ENCODE measurements at regions of chr17 and their contacts with region 1.

Region 1: DNA sequence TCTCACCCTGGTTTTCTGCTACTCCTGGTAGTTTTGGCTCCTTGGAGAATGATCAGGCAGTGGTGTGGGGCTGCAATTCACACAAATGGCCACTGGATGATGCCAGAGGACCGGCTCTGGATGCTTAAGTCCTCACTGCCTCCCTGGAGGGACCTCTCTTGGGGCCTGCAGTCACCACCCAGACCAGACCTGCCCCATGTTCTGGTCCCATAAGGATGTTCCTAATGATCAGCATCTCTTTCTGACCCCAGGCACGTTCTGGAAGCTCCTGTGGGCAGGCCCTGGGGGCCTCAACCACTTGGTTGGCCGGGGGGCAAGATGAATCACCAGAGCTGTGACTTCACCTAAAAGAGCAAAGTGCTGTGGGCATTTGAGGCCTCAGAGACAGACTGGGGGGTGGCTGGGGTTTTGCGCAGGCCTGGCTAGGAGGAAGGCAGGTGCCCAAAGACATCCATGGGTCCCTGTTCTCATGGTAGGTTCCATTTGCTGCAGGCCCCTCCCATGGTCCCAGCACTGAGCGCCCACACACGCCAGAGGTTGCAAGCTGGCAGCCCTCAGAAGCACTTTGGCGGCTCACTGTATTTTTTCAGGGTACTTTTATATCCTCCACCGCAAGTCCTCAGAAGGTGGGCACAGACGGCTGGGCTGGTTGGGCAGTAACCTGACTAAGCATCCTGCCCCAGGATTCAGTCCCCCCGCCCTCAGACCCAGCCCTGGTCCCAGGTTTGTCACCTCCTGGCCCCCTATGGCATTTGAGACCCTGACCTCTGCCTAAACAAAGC is 53.2 kb downstream of the NT5M start:
- DNase-seq: peak; percentile 38 to 76 (median 59)
- H3K4me3 ChIP-seq: no peak overlapping the region
- H3K4me3 Mint-ChIP-seq: no peak overlapping the region
- H3K27ac ChIP-seq: no peak overlapping the region
- H3K27ac Mint-ChIP-seq: peak overlapping the region in 1 of 8 donors; percentile 12
- H3K4me1 ChIP-seq: no peaks in the 10 kb centered on the region
- H3K4me1 Mint-ChIP-seq: peaks cover 5 to 6% (median 5%) of the 10 kb centered on the region in 3 donors
- H3K27me3 ChIP-seq: no peaks in the 10 kb centered on the region
- H3K27me3 Mint-ChIP-seq: peaks cover 0 to 5% of the 10 kb centered on the region in 2 donors

Region 2: GRCh38 chr17:17366941-17367875 is 10.9 kb after region 1 on chr17:
- CTCF ChIA-PET with region 1: interaction called, 13 read pairs
- POLR2A ChIA-PET with region 1: no interaction called
- DNase-seq: no peak
- H3K4me3 ChIP-seq: no peak overlapping the region
- H3K4me3 Mint-ChIP-seq: no peak overlapping the region
- H3K27ac ChIP-seq: no peak overlapping the region
- H3K27ac Mint-ChIP-seq: peak overlapping the region in 1 of 8 donors; percentile 72
- H3K4me1 ChIP-seq: peaks cover 15% of the 10 kb centered on the region
- H3K4me1 Mint-ChIP-seq: peaks cover 11% of the 10 kb centered on the region in 3 donors
- H3K27me3 ChIP-seq: peaks cover 3% of the 10 kb centered on the region
- H3K27me3 Mint-ChIP-seq: peaks cover 4 to 10% of the 10 kb centered on the region in 2 donors

Region 3: DNA sequence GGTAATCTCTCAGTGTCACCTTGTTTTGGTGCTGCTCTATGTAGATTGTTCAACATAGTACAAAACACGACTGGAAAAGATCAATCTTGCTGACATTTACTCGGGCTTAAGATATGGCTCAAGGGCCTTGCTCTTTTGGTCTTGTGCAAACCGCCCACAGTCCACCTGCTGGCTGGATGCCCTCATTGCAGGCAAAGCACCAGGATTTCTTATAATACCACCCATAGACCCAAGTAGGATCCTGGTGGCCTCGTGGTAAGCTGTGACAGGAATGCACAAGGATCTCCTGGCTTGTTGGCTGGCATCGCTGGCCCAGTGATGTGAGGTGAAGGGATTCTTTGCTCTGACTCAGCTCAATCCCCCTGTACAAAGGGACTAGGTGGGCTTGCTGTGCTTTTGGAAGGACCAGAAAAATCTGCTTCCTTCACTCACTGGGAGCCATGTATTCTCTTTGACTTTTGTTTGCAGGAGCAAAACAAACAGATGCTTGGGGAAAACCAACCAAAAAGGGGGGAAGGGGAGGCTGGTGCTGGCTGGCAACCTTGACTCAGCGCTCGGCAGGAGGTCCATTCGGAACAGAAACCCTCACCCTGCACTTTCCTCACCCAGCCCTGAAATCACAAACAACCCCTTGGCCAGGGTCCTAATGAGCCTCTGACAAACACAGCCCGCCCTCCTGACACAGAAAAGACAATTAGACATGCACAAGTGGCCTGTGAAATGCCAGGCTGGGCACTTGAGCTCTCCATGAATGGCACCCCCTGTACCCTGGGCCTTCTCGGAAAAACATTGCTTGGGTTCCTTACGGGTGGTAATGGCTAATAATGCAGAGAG is 83.9 kb after region 1 on chr17:
- CTCF ChIA-PET with region 1: interaction called, 12 read pairs
- POLR2A ChIA-PET with region 1: no interaction called
- DNase-seq: peak; percentile 60 to 83 (median 65)
- H3K4me3 ChIP-seq: no peak overlapping the region
- H3K4me3 Mint-ChIP-seq: no peak overlapping the region
- H3K27ac ChIP-seq: no peak overlapping the region
- H3K27ac Mint-ChIP-seq: peak overlapping the region in 3 of 8 donors; percentile 3 to 70 (median 31)
- H3K4me1 ChIP-seq: no peaks in the 10 kb centered on the region
- H3K4me1 Mint-ChIP-seq: peaks cover 4 to 10% (median 10%) of the 10 kb centered on the region in 3 donors
- H3K27me3 ChIP-seq: no peaks in the 10 kb centered on the region
- H3K27me3 Mint-ChIP-seq: peaks cover 0 to 3% of the 10 kb centered on the region in 2 donors

Region 4: DNA sequence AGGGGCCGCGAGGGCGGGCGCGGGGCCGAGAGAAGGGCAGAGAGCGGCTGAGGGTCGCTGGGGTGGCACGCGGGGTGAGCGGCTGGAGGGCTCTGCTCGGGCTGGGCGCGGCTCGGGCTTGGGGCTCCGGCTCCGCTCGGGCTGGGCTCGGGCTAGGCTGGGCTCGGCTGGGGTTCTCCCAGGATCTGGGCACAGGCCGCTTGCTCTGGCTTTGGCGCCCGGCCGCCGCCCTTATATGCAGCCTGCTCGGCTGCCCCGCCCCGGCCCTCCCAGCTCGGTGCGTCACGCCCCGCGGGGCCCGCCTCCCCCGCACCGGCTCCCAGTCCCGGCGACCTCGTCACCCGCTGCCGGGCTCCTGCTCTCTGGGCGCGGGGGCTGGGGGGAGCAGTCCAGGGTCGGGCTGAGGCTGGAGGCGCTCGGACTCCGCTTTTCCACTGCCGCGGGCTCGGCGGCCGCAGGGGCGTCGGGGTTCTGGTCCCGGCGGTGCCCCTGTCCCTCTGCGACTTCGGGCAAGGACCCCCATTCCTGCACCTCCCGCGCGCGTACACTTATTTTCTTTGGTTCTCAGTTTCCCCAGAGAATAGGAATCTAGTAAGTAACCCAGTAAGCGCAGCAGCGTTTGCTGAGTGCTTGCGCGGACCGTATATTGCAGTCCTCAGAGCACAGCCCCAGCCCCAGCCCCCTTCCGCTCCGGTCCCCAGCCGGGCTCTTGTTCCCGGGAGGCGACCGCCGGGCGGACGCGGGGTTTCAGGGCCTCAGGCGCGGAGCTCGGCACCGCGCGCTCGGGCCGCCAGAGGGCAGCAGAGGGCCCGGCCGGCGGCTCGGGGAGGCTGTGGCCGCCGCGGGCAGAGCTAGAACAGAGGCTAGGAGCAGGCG is 140.1 kb after region 1 on chr17 and contains the start of gene RASD1:
- CTCF ChIA-PET with region 1: interaction called, 25 read pairs
- POLR2A ChIA-PET with region 1: no interaction called
- DNase-seq: peak; percentile 70 to 82 (median 77)
- H3K4me3 ChIP-seq: peak within 1 kb of the TSS; percentile 63
- H3K4me3 Mint-ChIP-seq: peak within 1 kb of the TSS; percentile 76 to 92 (median 85)
- H3K27ac ChIP-seq: no peak within 1 kb of the TSS
- H3K27ac Mint-ChIP-seq: peak within 1 kb of the TSS in 4 of 8 donors; percentile 16 to 84 (median 76)
- H3K4me1 ChIP-seq: peaks cover 10% of the 10 kb centered on the region
- H3K4me1 Mint-ChIP-seq: peaks cover 11 to 25% (median 11%) of the 10 kb centered on the region in 3 donors
- H3K27me3 ChIP-seq: no peaks in the 10 kb centered on the region
- H3K27me3 Mint-ChIP-seq: peaks cover 5 to 7% of the 10 kb centered on the region in 2 donors
- total RNA-seq, gene RASD1: 1.0 to 1.1 TPM

Region 5: DNA sequence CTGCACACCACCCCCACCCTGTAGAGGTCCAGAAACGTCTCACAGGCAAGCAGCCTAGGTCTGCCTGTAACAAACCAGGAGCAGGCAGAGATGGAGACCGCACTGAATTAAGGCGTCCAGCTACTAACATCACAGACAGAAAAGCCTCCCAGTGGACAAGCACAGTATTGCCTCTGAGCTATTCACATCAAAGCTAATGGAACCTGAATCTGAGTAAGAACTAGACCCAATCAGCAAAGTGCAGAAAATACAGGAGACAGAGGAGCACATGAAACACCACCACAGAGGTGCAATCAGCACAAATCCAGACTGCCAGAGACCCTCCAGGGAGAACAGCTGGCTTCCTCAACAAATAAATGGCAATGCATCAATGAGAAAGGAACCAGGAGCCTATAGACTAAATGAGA is 257.4 kb after region 1 on chr17:
- CTCF ChIA-PET with region 1: interaction called, 13 read pairs
- POLR2A ChIA-PET with region 1: no interaction called
- DNase-seq: peak in 3 of 5 donors; percentile 14 to 34 (median 24)
- H3K4me3 ChIP-seq: no peak overlapping the region
- H3K4me3 Mint-ChIP-seq: no peak overlapping the region
- H3K27ac ChIP-seq: no peak overlapping the region
- H3K27ac Mint-ChIP-seq: no peak overlapping the region
- H3K4me1 ChIP-seq: no peaks in the 10 kb centered on the region
- H3K4me1 Mint-ChIP-seq: peaks cover 0 to 3% (median 2%) of the 10 kb centered on the region in 3 donors
- H3K27me3 ChIP-seq: no peaks in the 10 kb centered on the region
- H3K27me3 Mint-ChIP-seq: peaks cover 5 to 6% of the 10 kb centered on the region in 2 donors

Region 6: GRCh38 chr17:17636272-17636885 is 280.0 kb after region 1 on chr17:
- CTCF ChIA-PET with region 1: interaction called, 64 read pairs
- POLR2A ChIA-PET with region 1: no interaction called
- DNase-seq: no peak
- H3K4me3 ChIP-seq: no peak overlapping the region
- H3K4me3 Mint-ChIP-seq: no peak overlapping the region
- H3K27ac ChIP-seq: no peak overlapping the region
- H3K27ac Mint-ChIP-seq: peak overlapping the region in 1 of 8 donors; percentile 21
- H3K4me1 ChIP-seq: no peaks in the 10 kb centered on the region
- H3K4me1 Mint-ChIP-seq: no peaks in the 10 kb centered on the region
- H3K27me3 ChIP-seq: no peaks in the 10 kb centered on the region
- H3K27me3 Mint-ChIP-seq: no peaks in the 10 kb centered on the region

Region 7: DNA sequence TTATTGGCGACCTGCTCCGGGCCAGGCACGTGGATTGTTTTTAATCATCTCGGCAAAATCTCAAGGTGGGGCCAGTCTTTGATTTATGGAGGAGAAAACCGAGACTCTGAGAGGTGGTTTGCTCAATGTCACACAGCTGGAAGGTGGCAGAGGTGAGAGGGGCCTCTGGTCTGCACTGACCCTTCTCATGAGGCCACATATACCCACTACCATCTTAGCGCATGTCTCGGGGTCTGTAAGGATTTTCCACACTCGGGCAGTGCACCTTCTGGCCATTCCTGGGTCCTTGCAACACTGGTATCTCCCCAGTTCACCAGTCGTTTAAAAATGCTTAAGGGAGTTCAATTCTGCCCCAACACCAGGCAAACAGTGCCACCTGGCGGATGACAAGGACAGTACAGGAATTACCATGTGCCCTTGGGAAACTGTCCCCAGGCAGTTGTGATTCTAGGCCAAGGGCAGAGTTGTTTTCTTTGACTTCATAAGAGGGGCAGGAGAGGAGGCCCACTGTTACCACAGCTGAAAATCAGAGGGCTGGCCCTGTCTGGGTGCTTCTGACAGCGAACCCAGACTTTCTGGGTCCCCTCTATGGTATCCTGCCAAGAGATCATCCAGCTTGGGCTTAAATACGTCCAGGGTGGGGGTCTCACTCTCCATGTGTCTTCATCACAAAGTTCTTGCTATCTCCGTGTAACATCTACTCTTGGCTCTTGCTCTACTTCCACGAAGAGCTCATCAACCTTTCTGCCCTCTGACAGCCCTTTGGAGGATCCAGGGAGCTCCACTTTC is 285.5 kb after region 1 on chr17:
- CTCF ChIA-PET with region 1: interaction called, 64 read pairs
- POLR2A ChIA-PET with region 1: no interaction called
- DNase-seq: peak; percentile 61 to 82 (median 71)
- H3K4me3 ChIP-seq: no peak overlapping the region
- H3K4me3 Mint-ChIP-seq: no peak overlapping the region
- H3K27ac ChIP-seq: no peak overlapping the region
- H3K27ac Mint-ChIP-seq: peak overlapping the region in 1 of 8 donors; percentile 5
- H3K4me1 ChIP-seq: no peaks in the 10 kb centered on the region
- H3K4me1 Mint-ChIP-seq: peaks cover 0 to 3% (median 2%) of the 10 kb centered on the region in 3 donors
- H3K27me3 ChIP-seq: no peaks in the 10 kb centered on the region
- H3K27me3 Mint-ChIP-seq: peaks cover 5 to 14% of the 10 kb centered on the region in 2 donors